Colonic mucosa (tissue), 4 donors: ENCODE measurements at regions of chr3 and their contacts with region 1.

Region 1: DNA sequence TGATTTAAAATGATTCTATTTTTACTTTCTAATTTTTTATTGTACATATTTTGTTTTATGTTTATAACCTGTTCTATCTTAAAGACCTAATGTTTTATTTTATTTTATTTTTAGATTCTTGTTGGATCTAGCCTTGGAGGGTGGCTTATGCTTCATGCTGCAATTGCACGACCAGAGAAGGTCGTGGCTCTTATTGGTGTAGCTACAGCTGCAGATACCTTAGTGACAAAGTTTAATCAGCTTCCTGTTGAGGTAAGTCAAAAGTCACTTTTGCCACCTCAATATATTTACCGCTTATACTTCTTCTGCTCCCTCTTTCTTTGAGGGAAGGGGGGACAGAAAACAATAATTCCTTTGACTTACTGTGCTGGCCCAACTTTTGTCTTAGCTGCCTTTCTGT is 8.0 kb downstream of the ABHD10 start:
- DNase-seq: no peak
- H3K4me3 ChIP-seq: no peak overlapping the region
- H3K27ac ChIP-seq: no peak overlapping the region
- H3K4me1 ChIP-seq: peaks cover under 1% of the 10 kb centered on the region
- H3K27me3 ChIP-seq: no peaks in the 10 kb centered on the region
- CTCF ChIP-seq: no peak

Region 2: GRCh38 chr3:112017091-112017490 is 30.3 kb after region 1 on chr3:
- intact Hi-C with region 1: loop called (anchors 2 kb)
- DNase-seq: no peak
- H3K4me3 ChIP-seq: no peak overlapping the region
- H3K27ac ChIP-seq: no peak overlapping the region
- H3K4me1 ChIP-seq: no peaks in the 10 kb centered on the region
- H3K27me3 ChIP-seq: no peaks in the 10 kb centered on the region
- CTCF ChIP-seq: no peak